IMR-90 (cell line): ENCODE measurements at regions of chr2 and their contacts with region 1.

Region 1: DNA sequence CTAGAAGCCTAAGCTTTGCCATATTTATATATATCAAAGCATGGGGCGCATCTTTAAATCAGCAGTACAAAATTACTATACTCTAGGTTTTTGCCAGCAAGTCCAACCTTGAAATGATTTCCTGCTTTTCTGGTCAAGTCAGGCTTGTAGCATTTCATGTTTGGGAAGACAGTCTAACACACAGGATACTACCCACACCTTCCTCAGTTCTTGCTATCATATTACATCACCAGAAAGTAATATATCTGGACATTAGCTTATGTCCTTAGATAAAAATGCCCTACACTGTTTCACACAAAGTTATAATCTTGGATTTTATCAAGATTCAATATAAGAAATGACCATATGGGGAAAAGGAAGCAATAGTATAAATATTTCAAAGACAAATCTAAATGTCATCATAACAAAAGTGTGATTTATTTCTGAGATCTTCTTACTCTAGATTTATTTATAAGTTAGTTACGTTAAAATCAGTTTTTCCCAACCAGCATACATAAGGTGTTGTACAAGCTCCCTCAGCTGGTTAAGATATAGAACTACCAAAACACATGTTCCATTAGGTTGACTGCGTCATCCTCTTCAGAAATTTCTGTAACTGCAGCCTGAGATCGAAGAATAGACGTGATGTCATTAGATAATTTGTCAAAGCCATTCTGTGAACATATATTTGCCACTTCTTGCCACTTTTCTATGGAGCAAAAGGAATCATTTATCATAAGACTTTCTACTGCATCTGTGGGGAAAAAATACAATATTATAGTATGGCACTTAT is 56.7 kb downstream of the CLHC1 start:
- DNase-seq: peak; percentile 87
- ATAC-seq: peak; percentile 95
- H3K4me3 ChIP-seq: no peak overlapping the region
- H3K27ac ChIP-seq: no peak overlapping the region
- H3K4me1 ChIP-seq: peaks cover 2% of the 10 kb centered on the region; the same call in 1 of the 2 replicates
- H3K27me3 ChIP-seq: no peaks in the 10 kb centered on the region
- CTCF ChIP-seq: peak; percentile 89
- POLR2A ChIP-seq: no peak
- RAD21 ChIP-seq: peak; percentile 93

Region 2: DNA sequence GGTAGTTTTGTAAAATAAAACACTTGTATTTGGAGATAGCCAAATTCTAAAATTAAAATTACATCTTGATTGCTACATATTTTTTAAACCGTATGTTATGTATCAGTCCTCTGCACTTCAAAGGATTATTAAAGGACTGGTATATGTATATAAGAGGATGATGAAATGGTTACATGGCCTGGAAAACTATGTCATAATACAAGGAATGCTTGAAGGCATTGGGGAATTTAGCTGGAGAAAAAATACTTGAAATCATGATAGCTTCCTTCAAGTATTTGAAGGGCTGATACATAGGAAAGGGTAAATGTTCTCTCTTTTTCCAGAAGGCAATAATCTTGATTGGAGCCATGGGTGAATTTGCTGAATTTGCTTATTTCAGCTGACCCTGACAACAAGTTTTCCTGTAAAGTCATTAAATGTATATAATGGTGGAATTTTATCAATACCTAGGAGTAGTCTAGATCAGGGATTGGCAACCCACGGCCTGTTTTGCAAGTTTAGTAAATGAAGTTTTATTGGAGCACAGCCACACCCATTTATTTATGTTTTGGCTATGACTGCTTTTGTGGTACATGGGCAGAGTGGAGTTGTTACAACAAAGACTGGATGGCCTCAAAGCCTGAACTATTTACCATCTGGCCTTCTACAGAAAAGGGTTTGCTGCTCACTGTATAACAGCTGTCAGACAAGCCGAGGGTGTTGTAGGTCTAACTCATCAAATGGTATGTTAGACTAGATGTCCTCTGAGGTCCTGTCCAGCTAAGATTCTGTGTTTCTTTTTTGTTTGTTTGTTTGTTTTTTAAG is 1025.6 kb before region 1 on chr2:
- CTCF ChIA-PET with region 1: no interaction called
- POLR2A ChIA-PET with region 1: no interaction called
- dilution Hi-C with region 1: no loop called
- in situ Hi-C with region 1: loop called (anchors 25 kb)
- intact Hi-C with region 1: no loop called
- DNase-seq: peak; percentile 73
- ATAC-seq: peak; percentile 81
- H3K4me3 ChIP-seq: no peak overlapping the region
- H3K27ac ChIP-seq: no peak overlapping the region
- H3K4me1 ChIP-seq: peaks cover 3% of the 10 kb centered on the region; the same call in 1 of the 2 replicates
- H3K27me3 ChIP-seq: no peaks in the 10 kb centered on the region
- CTCF ChIP-seq: no peak
- POLR2A ChIP-seq: no peak
- RAD21 ChIP-seq: no peak

Region 3: DNA sequence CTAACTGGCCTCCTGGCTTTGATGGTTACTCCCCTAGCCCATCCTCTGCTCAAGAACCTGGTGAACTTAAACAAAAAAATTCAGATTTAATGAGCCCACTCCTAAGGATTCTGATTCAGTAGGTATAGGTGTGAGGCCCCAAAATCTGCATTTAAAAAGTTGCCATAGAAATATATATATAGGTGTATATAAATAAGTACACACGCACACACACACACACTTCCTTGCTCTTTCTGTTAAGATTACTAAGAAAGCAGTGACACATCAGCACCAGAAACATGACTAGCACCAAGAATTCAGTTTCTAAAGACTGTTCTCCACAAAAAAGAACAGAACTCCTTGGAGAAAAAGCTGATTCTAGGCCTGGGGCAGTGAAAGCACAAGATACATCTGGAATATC is 434.2 kb before region 1 on chr2:
- CTCF ChIA-PET with region 1: no interaction called
- POLR2A ChIA-PET with region 1: no interaction called
- dilution Hi-C with region 1: no loop called
- in situ Hi-C with region 1: loop called (anchors 10 kb)
- intact Hi-C with region 1: no loop called
- DNase-seq: peak; percentile 30
- ATAC-seq: no peak
- H3K4me3 ChIP-seq: no peak overlapping the region
- H3K27ac ChIP-seq: no peak overlapping the region
- H3K4me1 ChIP-seq: no peaks in the 10 kb centered on the region
- H3K27me3 ChIP-seq: peaks cover 53% of the 10 kb centered on the region
- CTCF ChIP-seq: no peak
- POLR2A ChIP-seq: no peak
- RAD21 ChIP-seq: no peak

Region 4: DNA sequence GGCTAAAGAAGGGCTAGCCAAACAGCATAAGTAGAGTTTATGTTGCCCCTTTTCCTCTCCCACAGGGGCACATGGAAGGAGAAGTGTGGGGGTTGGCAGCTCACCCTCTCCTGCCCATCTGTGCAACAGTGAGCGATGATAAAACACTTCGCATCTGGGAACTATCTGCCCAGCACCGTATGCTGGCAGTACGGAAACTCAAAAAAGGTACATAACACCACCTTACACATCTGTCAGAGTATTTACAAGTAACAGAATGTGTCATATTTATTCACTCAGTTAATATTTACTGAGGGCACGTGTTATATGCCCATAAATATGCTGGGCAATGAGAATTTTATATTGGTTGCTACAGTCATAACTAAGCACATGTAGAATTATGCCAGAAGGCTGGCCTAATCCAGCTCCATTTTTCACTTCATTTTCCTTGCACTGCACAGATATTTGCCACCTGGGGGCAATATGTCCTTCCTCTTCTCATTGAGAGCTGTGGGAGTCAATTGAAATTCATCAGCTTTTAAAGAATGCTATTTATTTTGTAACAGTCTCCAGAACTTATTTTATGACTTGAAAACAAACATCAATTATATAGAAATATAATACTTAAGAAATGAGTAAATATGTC is 275.8 kb before region 1 on chr2:
- CTCF ChIA-PET with region 1: interaction called, 32 read pairs
- POLR2A ChIA-PET with region 1: no interaction called
- dilution Hi-C with region 1: no loop called
- in situ Hi-C with region 1: no loop called
- intact Hi-C with region 1: loop called (anchors 2 kb)
- DNase-seq: peak; percentile 70
- ATAC-seq: peak; percentile 61
- H3K4me3 ChIP-seq: no peak overlapping the region
- H3K27ac ChIP-seq: no peak overlapping the region
- H3K4me1 ChIP-seq: peaks cover 7% of the 10 kb centered on the region
- H3K27me3 ChIP-seq: no peaks in the 10 kb centered on the region; the same call in 1 of the 2 replicates
- CTCF ChIP-seq: peak; percentile 84
- POLR2A ChIP-seq: no peak
- RAD21 ChIP-seq: peak; percentile 86

Region 5: DNA sequence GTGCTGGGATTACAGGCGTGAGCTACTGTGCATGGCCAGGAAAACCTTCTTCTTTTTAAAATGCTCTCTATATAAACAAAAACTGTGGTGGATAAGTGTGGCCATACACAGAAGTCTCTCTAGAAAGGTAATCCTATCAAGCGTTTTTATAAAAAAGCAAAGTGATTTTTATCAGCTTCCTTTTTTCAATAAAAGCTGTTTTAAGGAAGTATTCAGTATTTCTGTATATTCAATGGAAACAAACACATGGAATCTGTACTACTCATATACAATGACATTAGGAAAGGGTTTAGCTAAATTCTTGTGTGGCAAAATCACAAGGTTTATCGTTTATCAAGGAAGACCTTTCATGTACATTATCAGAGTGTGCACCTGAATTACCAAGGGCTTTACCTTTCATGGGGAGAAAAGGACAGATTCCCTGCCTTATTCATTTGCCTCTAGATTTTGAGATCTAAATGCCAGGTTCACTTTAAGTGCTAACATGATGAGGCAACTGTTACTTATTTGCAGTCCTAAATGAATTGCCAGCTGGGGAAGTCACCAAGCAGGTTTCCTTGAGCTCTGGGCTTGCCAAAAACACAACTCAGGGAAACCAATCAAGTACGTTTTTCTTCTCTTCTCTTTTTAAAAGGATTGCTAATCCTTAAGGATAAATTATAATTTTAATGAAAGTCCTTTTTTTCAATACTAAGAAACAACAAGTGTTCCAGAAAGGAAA is 196.0 kb before region 1 on chr2:
- CTCF ChIA-PET with region 1: no interaction called
- POLR2A ChIA-PET with region 1: no interaction called
- dilution Hi-C with region 1: no loop called
- in situ Hi-C with region 1: no loop called
- intact Hi-C with region 1: loop called (anchors 5 kb)
- DNase-seq: no peak
- ATAC-seq: no peak
- H3K4me3 ChIP-seq: no peak overlapping the region
- H3K27ac ChIP-seq: no peak overlapping the region; the same call in 1 of the 2 replicates
- H3K4me1 ChIP-seq: peaks cover 16% of the 10 kb centered on the region
- H3K27me3 ChIP-seq: no peaks in the 10 kb centered on the region
- CTCF ChIP-seq: no peak
- POLR2A ChIP-seq: no peak
- RAD21 ChIP-seq: no peak

Region 6: GRCh38 chr2:55268907-55269644 is 93.6 kb after region 1 on chr2 and contains the start of gene MTIF2:
- CTCF ChIA-PET with region 1: no interaction called
- POLR2A ChIA-PET with region 1: no interaction called
- dilution Hi-C with region 1: no loop called
- in situ Hi-C with region 1: no loop called
- intact Hi-C with region 1: no loop called
- DNase-seq: peak; percentile 91
- ATAC-seq: peak; percentile 99
- H3K4me3 ChIP-seq: peak within 1 kb of the TSS; percentile 74
- H3K27ac ChIP-seq: peak within 1 kb of the TSS; percentile 85
- H3K4me1 ChIP-seq: no peaks in the 10 kb centered on the region; the same call in 1 of the 2 replicates
- H3K27me3 ChIP-seq: no peaks in the 10 kb centered on the region
- CTCF ChIP-seq: 0 out of 2 replicates have a peak, but pooled peaks have one; percentile 11
- POLR2A ChIP-seq: peak; percentile 81
- RAD21 ChIP-seq: peak; percentile 32
- total RNA-seq, gene MTIF2: 22.6 and 33.3 TPM in 2 replicates

Region 7: DNA sequence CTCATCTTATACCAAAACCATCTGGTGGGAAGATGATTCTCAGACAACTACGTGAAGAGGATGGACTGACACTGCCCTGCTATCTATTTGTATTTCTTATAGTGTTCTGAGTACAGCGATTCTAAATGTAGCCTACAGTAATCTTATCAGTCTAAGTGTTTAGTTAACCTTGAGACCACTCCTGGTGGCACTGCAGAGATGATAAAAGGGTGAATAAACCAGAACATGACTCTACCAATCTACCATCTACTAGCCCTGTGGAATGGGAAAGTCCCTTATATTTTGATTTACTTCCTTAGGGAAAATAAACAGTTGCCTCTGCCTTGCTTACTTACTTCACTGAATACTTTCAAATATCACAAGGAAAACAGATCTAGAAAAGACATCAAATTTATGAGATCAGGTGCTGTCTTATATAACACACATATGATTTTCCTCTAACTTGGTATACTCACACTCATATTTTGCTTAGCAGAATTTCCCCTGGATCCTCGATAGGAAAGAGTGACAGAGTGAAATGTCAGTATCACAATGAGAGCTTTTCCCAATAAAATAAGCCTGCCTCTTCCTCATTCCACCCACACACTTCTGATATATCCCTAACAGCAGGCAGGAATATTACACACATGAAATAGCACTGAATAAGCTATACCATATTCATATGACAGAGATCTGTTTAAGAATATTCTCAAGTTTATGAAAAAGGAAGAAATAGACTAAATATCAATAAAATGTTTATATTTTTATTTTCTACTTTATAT is 152.2 kb after region 1 on chr2:
- CTCF ChIA-PET with region 1: no interaction called
- POLR2A ChIA-PET with region 1: no interaction called
- dilution Hi-C with region 1: no loop called
- in situ Hi-C with region 1: no loop called
- intact Hi-C with region 1: no loop called
- DNase-seq: no peak
- ATAC-seq: no peak
- H3K4me3 ChIP-seq: no peak overlapping the region
- H3K27ac ChIP-seq: no peak overlapping the region
- H3K4me1 ChIP-seq: no peaks in the 10 kb centered on the region
- H3K27me3 ChIP-seq: no peaks in the 10 kb centered on the region
- CTCF ChIP-seq: no peak
- POLR2A ChIP-seq: no peak
- RAD21 ChIP-seq: no peak